Lower leg skin (tissue), 4 donors: ENCODE measurements at regions of chr1 and their contacts with region 1.

Region 1: GRCh38 chr1:149931212-149931790 is 3.7 kb upstream of the SF3B4 start:
- DNase-seq: peak in 1 of 2 donors; percentile 73
- H3K4me3 ChIP-seq: no peak overlapping the region
- CTCF ChIP-seq: no peak
- POLR2A ChIP-seq: no peak

Region 2: DNA sequence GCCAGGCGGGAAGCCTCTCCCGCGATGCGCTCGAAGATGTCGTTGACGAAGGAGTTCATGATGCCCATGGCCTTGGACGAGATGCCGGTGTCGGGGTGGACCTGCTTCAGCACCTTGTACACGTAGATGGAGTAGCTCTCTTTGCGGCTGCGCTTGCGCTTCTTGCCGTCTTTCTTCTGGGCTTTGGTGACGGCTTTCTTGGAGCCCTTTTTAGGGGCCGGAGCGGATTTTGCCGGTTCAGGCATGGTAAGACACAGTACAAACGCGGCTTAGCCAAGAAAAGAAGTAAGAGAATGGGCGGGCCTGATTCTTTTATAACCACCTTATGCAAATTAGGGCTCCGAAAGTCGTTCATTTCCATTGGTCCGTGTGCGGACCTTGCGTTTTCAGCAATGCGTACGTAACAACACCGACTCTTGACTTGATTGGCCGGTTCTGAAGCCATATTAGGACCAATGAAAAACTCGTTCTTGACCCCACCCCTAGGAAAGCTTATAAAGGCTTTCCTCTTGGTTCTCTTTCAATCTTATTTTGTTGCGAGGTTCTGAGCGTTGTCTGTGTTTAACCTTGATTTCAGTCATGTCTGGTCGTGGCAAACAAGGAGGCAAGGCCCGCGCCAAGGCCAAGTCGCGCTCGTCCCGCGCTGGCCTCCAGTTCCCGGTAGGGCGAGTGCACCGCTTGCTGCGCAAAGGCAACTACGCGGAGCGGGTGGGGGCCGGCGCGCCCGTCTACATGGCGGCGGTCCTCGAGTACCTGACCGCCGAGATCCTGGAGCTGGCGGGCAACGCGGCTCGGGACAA is 44.7 kb before region 1 on chr1:
- intact Hi-C with region 1: loop called (anchors 5 kb)
- DNase-seq: peak; percentile 96
- H3K4me3 ChIP-seq: peak overlapping the region; percentile 69
- CTCF ChIP-seq: no peak
- POLR2A ChIP-seq: peak in 1 of 2 donors; percentile 99

Region 3: DNA sequence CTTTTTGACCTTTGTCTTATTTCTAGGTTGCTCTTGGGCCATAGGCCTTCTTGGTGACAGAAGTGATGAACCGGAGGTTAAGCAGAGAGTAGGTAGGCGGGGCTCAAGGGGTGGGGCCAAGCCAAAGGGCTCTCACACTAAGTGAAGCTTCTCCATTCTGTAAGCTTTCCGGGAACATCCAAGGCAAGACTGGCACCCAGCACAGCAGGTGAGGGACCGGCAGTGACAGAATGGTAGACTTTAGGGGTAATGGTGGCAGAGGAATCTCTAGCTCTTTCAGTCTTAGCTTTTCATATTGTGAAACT is 1225.2 kb after region 1 on chr1 and contains the start of gene TNFAIP8L2:
- intact Hi-C with region 1: no loop called
- DNase-seq: peak in 1 of 2 donors; percentile 61
- H3K4me3 ChIP-seq: no peak within 1 kb of the TSS
- CTCF ChIP-seq: no peak
- POLR2A ChIP-seq: no peak
- total RNA-seq, gene TNFAIP8L2: 1.2 to 5.6 (median 3.0) TPM